ENCODE measurements at regions of chr17 and their contacts with region 1.

Region 1: DNA sequence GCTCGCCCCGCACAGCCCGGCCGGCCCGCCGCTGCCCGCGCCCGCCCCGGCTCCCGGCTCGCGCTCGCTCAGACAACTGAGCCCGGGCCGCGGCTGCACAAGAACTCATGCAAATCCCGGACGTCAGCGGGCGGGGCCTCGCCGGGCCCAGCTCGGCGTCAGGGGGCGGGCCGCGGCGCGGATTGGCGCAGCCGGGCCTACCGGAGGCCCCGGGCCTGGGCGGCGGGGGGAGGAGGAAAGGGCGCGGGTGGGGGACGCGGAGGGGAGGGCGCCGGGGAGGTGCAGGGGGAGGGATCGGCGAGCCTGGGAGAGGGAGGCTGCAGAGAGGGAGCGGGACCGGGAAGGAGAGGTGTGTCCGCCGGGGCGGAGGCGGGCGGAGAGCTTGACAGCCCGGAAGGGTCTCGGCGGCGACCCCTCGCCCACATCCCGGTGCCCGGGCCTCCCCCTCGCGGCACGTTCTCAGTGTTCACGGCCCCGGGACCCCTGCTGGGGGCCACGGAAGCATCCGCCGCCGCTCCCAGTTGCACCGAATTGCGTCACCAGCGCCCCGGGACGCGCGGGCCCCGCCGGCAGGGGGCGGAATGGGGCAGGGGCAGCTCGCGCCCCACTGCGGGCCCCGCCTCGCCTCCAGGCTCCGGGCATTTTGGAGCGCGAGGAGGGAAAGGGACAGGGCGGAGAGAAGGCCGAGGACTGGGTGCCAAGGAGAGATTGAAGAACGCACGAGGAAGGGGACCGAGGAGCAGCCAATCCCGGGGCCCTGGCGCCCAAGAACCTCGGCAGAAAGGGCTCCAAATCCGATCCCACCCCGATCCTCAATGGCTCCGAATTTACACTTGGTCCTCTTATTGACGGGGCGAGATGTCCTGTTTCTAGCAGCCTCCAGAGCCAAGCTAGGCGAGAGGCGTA is at the start of gene CBX4:
- H3K4me3 Mint-ChIP-seq: peak within 1 kb of the TSS; percentile 92
- H3K27ac Mint-ChIP-seq: peak within 1 kb of the TSS; percentile 93
- H3K4me1 Mint-ChIP-seq: peaks cover 78% of the 10 kb centered on the region
- H3K27me3 Mint-ChIP-seq: peaks cover 41% of the 10 kb centered on the region

Region 2: DNA sequence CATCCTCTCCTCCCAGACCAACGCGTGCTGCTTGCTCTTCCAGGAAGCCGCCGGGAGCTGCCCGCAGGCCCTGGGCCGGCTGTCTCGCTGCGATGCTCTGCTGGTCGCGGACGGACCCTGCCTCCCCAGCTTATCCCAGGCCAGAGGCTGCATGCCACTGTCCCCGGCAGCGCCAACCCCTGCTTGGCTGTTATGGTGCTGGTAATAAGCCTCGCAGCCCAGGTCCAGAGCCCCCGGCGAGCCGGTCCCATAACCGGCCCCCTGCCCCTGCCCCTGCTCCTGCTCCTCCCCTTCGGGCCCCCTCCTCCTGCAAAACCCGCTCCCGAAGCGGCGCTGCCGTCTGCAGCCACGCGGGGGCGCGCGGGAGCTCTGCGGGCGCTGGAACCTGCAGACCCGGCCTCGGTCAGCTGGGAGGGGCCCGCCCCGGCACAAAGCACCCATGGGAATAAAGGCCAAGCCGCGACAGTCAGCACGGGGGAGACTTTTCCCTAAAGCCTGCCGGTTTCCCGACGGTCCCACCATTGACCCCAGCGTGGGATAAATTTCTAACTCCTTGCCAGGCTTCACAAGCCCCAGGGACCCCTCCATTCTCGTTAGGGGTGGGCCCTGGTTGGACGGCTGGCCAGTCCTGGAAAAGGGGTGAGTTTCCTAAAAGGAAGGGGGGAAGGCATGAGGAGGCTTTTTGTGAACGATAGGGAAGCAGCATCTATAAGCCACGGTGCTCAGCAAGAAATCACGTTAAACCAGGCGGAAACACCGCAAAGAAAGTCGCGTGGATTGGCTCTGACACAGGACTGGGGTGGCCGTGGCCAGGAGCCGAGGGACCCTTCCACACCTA is 97.6 kb before region 1 on chr17:
- intact Hi-C with region 1: no loop called
- H3K4me3 Mint-ChIP-seq: no peak overlapping the region
- H3K27ac Mint-ChIP-seq: no peak overlapping the region
- H3K4me1 Mint-ChIP-seq: no peaks in the 10 kb centered on the region
- H3K27me3 Mint-ChIP-seq: peaks cover 87% of the 10 kb centered on the region

Region 3: GRCh38 chr17:79796763-79797491 is 42.7 kb before region 1 on chr17 and contains the start of gene CBX8:
- intact Hi-C with region 1: loop called (anchors 2 kb)
- H3K4me3 Mint-ChIP-seq: peak within 1 kb of the TSS; percentile 79
- H3K27ac Mint-ChIP-seq: peak within 1 kb of the TSS; percentile 89
- H3K4me1 Mint-ChIP-seq: peaks cover 49% of the 10 kb centered on the region
- H3K27me3 Mint-ChIP-seq: peaks cover 66% of the 10 kb centered on the region

Measured in dendritic cell treated with granulocyte-macrophage colony-stimulating factor and Interleukin-4, amounts not matched to agents 40 ng/mL and 50 ng/mL, for 4 days (primary cell).